Vagina (tissue), 2 donors: ENCODE measurements at regions of chr2 and their contacts with region 1.

Region 1: DNA sequence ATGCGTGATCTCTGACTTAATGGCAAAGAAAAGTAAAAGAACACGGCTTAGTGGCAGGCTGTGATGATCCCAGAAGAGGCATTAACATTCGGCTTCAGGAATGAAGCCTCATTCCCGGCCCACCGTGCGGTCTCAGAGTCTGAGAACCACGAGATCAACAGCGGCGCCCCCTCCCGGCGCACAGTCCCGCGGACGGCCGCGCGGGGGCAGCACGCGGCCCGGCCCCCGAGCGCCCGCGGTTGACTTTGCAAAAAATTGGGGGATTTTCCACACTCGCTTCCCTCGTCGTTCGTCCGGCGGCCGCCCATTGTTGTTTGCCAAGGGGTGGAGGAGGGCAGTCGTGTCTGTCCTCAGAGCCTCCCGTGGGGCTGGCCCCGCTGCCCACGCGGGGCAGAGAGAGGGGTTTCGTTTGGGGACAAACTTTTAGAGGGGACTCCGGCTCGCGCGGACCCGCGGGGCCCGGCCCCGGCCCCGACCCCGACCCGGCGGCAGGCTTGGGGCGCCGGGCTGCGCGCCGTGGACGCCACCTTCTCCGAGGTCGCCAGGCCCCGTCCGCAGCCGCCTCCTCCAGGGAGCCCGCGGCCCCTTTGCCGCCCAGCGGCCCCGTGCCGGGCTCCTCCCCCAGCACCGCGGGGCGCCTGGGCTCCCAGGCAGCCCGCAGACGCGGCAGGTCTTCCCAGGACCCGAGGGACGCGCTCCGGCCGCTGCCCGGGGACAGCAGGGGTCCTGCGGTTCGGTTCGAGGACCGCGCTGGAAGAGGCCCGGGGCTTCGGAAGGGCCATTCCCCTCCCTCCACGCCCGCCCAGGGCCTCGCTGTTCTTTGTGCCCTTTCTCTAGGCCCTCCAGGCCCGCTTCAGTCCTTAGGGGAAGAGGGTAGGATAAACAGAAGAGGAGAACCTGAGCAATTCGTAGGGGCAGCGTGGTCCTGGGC is 3.4 kb upstream of the HS6ST1 start:
- DNase-seq: peak in 1 of 2 donors; percentile 92
- H3K4me3 ChIP-seq: peak overlapping the region; percentile 55 to 91
- H3K27ac ChIP-seq: peak overlapping the region; percentile 81
- H3K4me1 ChIP-seq: peaks cover 56% of the 10 kb centered on the region
- H3K27me3 ChIP-seq: no peaks in the 10 kb centered on the region
- CTCF ChIP-seq: peak; percentile 85 to 94 (median 86)
- POLR2A ChIP-seq: no peak

Region 2: DNA sequence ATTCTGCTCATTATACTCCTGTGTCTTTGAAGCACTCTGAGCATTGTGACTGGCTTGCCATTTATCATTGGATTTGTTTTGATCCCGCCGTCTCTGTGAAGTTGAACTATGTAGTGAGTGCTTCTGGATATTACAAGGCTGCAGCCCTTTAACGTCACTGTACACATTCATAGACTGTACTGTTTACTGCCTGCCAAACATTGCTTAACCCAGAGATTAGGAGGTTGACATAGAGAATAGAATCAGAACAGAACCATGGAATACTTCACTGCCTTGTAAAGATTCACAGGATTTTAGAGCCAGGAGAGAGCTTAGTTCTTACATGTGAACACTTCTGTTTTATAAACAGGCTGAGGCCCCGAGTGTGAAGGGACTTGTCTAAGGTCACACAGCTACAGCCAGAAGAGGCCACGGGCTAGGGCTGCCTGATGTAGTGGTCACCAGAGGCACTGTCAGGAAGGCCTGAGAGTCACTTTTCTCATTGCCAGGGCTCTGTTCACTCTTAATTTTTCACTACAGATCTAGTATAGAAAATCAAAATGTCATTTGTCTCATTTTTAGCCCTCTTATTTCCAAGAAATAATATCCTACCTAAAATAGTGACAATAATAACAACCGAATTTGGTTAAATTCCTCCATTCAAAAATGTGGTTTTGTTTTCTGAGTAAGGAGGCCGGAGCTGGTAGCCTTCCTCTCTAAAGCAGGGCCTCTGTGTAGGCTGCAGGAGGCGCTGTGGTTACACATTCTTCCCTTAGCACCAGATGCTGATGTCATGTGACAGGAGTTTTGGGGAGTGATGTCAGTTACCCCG is 143.2 kb before region 1 on chr2:
- intact Hi-C with region 1: loop called (anchors 10 kb)
- DNase-seq: no peak
- H3K4me3 ChIP-seq: no peak overlapping the region
- H3K27ac ChIP-seq: no peak overlapping the region
- H3K4me1 ChIP-seq: no peaks in the 10 kb centered on the region
- H3K27me3 ChIP-seq: no peaks in the 10 kb centered on the region
- CTCF ChIP-seq: peak; percentile 23 to 58 (median 55)
- POLR2A ChIP-seq: no peak

Region 3: DNA sequence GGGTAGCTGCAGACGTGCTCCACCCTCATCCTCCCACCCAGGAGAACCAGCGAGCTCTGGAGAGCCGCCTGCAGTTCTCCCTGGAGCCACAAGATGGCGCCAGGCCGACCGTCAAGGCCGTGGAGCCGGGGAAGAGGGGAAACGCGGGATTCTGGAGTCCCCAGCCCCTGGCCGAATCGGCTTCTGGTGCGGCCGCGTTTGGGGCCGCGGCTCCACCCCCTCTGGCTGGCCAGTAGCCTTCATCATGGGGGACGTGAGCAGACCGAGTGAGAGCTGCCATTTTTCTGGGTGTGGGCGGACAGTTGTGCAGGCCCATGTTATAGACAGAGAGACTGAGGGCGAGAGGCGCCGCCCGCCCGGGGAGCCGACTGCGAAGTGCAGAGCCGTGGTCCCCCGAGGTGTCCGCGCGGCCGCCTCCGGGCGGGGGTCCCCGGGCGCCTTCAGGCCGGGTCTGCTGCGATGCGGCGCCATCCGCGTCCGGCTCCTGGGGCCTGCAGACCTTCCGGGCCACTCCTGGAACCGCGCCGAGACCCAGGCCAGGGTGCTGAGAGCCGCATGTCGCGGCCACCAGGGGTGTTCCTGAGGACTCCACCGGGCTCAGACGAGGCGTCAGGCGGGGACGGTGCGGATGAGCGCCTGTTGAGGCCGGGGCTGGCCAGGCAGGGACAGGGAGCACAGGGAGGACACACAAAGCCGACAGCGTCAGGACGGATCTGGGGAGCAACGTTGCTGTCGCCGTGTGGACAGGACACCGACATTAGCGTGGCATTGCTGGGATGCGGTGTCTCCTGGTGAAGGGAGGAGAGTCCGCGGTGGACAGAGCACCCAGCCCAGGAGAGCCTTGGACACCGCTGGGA is 414.9 kb after region 1 on chr2:
- intact Hi-C with region 1: loop called (anchors 10 kb)
- DNase-seq: peak in 1 of 2 donors; percentile 77
- H3K4me3 ChIP-seq: peak overlapping the region; percentile 25 to 34
- H3K27ac ChIP-seq: no peak overlapping the region
- H3K4me1 ChIP-seq: peaks cover 25% of the 10 kb centered on the region
- H3K27me3 ChIP-seq: no peaks in the 10 kb centered on the region
- CTCF ChIP-seq: peak; percentile 82 to 96 (median 91)
- POLR2A ChIP-seq: no peak